GM12878 (cell line): ENCODE measurements at regions of chr18 and their contacts with region 1.

Region 1: GRCh38 chr18:2932247-2933181 is 80.4 kb downstream of the LPIN2 start:
- DNase-seq: peak; percentile 23
- ATAC-seq: peak; percentile 76
- H3K4me3 ChIP-seq: no peak overlapping the region
- H3K27ac ChIP-seq: no peak overlapping the region
- H3K4me1 ChIP-seq: no peaks in the 10 kb centered on the region
- H3K27me3 ChIP-seq: no peaks in the 10 kb centered on the region
- CTCF ChIP-seq: peak; percentile 40 to 71 (median 59); a peak in 5 of 6 replicates
- EP300 ChIP-seq: no peak
- POLR2A ChIP-seq: no peak
- RAD21 ChIP-seq: peak; percentile 94

Region 2: GRCh38 chr18:2729757-2730156 is 202.8 kb before region 1 on chr18:
- CTCF ChIA-PET with region 1: no interaction called
- POLR2A ChIA-PET with region 1: no interaction called
- RAD21 ChIA-PET with region 1: no interaction called
- SMC1A ChIA-PET with region 1: no interaction called
- in situ Hi-C with region 1: no loop called
- intact Hi-C with region 1: no loop called
- DNase-seq: no peak
- ATAC-seq: no peak
- H3K4me3 ChIP-seq: no peak overlapping the region
- H3K27ac ChIP-seq: no peak overlapping the region
- H3K4me1 ChIP-seq: no peaks in the 10 kb centered on the region
- H3K27me3 ChIP-seq: no peaks in the 10 kb centered on the region
- CTCF ChIP-seq: no peak
- EP300 ChIP-seq: no peak
- POLR2A ChIP-seq: no peak
- RAD21 ChIP-seq: no peak

Region 3: GRCh38 chr18:2846636-2847364 is 85.7 kb before region 1 on chr18 and contains the start of gene EMILIN2:
- CTCF ChIA-PET with region 1: no interaction called
- POLR2A ChIA-PET with region 1: no interaction called
- RAD21 ChIA-PET with region 1: no interaction called
- SMC1A ChIA-PET with region 1: no interaction called
- in situ Hi-C with region 1: no loop called
- intact Hi-C with region 1: no loop called
- DNase-seq: no peak
- ATAC-seq: peak; percentile 81
- H3K4me3 ChIP-seq: peak within 1 kb of the TSS; percentile 59
- H3K27ac ChIP-seq: no peak within 1 kb of the TSS
- H3K4me1 ChIP-seq: no peaks in the 10 kb centered on the region
- H3K27me3 ChIP-seq: peaks cover 4 to 14% of the 10 kb centered on the region in 2 experiments
- CTCF ChIP-seq: no peak
- EP300 ChIP-seq: no peak
- POLR2A ChIP-seq: no peak
- RAD21 ChIP-seq: no peak
- polyA plus RNA-seq, gene EMILIN2: 0.58 to 1.1 TPM

Region 4: DNA sequence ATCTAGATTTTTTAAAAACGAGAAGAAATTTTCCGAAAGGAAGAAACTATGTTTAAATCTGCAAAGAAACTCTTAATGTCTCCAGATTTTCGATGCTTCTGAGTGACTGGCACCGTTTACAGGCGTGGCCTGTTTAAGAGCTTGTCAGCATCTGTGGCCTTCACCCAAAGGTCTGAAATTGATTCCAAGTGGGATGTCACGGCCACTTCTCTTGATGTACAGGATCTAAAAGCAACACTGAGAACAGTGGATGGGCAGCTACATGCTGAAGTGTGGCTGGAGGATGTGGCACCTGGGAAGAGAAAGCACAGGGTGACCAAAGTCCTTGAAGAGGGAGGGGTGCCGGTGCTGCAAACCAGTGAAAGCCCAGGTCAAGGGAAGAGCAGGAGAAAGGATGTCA is 57.7 kb before region 1 on chr18:
- CTCF ChIA-PET with region 1: no interaction called
- POLR2A ChIA-PET with region 1: no interaction called
- RAD21 ChIA-PET with region 1: no interaction called
- SMC1A ChIA-PET with region 1: no interaction called
- in situ Hi-C with region 1: no loop called
- intact Hi-C with region 1: no loop called
- DNase-seq: no peak
- ATAC-seq: no peak
- H3K4me3 ChIP-seq: no peak overlapping the region
- H3K27ac ChIP-seq: no peak overlapping the region
- H3K4me1 ChIP-seq: no peaks in the 10 kb centered on the region
- H3K27me3 ChIP-seq: no peaks in the 10 kb centered on the region
- CTCF ChIP-seq: no peak
- EP300 ChIP-seq: no peak
- POLR2A ChIP-seq: no peak
- RAD21 ChIP-seq: no peak

Region 5: GRCh38 chr18:2948038-2948437 is 15.5 kb after region 1 on chr18:
- CTCF ChIA-PET with region 1: interaction called, 13 read pairs
- POLR2A ChIA-PET with region 1: interaction called, 3 read pairs
- RAD21 ChIA-PET with region 1: interaction called, 9 read pairs
- SMC1A ChIA-PET with region 1: interaction called, 18 read pairs
- in situ Hi-C with region 1: no loop called
- intact Hi-C with region 1: no loop called
- DNase-seq: no peak
- ATAC-seq: no peak
- H3K4me3 ChIP-seq: no peak overlapping the region
- H3K27ac ChIP-seq: no peak overlapping the region
- H3K4me1 ChIP-seq: no peaks in the 10 kb centered on the region
- H3K27me3 ChIP-seq: no peaks in the 10 kb centered on the region
- CTCF ChIP-seq: no peak; a peak in 1 of 6 replicates
- EP300 ChIP-seq: no peak
- POLR2A ChIP-seq: no peak
- RAD21 ChIP-seq: no peak

Region 6: DNA sequence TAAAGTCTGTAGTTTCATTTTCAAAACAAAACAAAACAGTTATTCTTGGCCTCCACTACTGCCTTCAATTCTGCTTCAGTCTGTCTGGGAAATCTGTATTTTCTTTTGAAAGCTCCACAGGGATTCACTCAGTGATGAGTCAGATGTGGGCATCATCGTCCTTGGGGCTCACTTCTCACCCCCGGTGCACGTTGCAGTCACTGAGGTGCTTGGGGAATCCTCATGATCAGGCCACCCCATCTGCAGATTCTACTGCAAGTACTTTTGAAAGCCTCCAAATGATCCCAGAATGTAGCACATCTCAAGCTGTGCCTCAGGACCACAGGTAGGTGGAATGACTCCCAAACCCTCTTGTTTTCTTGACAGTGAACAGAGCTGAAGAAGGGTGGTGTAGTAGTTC is 46.1 kb after region 1 on chr18:
- CTCF ChIA-PET with region 1: interaction called, 255 read pairs
- POLR2A ChIA-PET with region 1: interaction called, 3 read pairs
- RAD21 ChIA-PET with region 1: interaction called, 238 read pairs
- SMC1A ChIA-PET with region 1: interaction called, 334 read pairs
- in situ Hi-C with region 1: no loop called
- intact Hi-C with region 1: no loop called
- DNase-seq: no peak
- ATAC-seq: peak; percentile 16
- H3K4me3 ChIP-seq: peak overlapping the region; percentile 41; the same call in 1 of the 2 replicates
- H3K27ac ChIP-seq: peak overlapping the region; percentile 70
- H3K4me1 ChIP-seq: peaks cover 41% of the 10 kb centered on the region
- H3K27me3 ChIP-seq: no peaks in the 10 kb centered on the region
- CTCF ChIP-seq: no peak
- EP300 ChIP-seq: no peak
- POLR2A ChIP-seq: no peak
- RAD21 ChIP-seq: no peak

Region 7: GRCh38 chr18:2994603-2995432 is 62.3 kb after region 1 on chr18:
- CTCF ChIA-PET with region 1: interaction called, 255 read pairs
- POLR2A ChIA-PET with region 1: no interaction called
- RAD21 ChIA-PET with region 1: interaction called, 15 read pairs
- SMC1A ChIA-PET with region 1: interaction called, 334 read pairs
- in situ Hi-C with region 1: no loop called
- intact Hi-C with region 1: no loop called
- DNase-seq: no peak
- ATAC-seq: peak; percentile 93
- H3K4me3 ChIP-seq: no peak overlapping the region
- H3K27ac ChIP-seq: peak overlapping the region; percentile 53; the same call in 1 of the 2 replicates
- H3K4me1 ChIP-seq: peaks cover 33% of the 10 kb centered on the region
- H3K27me3 ChIP-seq: no peaks in the 10 kb centered on the region
- CTCF ChIP-seq: peak; percentile 69 to 71 (median 70)
- EP300 ChIP-seq: no peak
- POLR2A ChIP-seq: no peak
- RAD21 ChIP-seq: peak; percentile 84

Region 8: GRCh38 chr18:3135536-3135935 is 203.0 kb after region 1 on chr18:
- CTCF ChIA-PET with region 1: interaction called, 3 read pairs
- POLR2A ChIA-PET with region 1: no interaction called
- RAD21 ChIA-PET with region 1: interaction called, 3 read pairs
- SMC1A ChIA-PET with region 1: no interaction called
- in situ Hi-C with region 1: loop called (anchors 10 kb)
- intact Hi-C with region 1: no loop called
- DNase-seq: no peak
- ATAC-seq: no peak
- H3K4me3 ChIP-seq: no peak overlapping the region
- H3K27ac ChIP-seq: no peak overlapping the region
- H3K4me1 ChIP-seq: no peaks in the 10 kb centered on the region
- H3K27me3 ChIP-seq: no peaks in the 10 kb centered on the region
- CTCF ChIP-seq: no peak
- EP300 ChIP-seq: no peak
- POLR2A ChIP-seq: no peak
- RAD21 ChIP-seq: no peak